Calu3 (cell line): ENCODE measurements at regions of chr7 and their contacts with region 1.

Region 1: GRCh38 chr7:142523821-142524460 is 225.3 kb upstream of the PRSS1 start:
- DNase-seq: no peak
- H3K4me3 Mint-ChIP-seq: no peak overlapping the region
- H3K27ac Mint-ChIP-seq: no peak overlapping the region
- H3K4me1 Mint-ChIP-seq: no peaks in the 10 kb centered on the region
- H3K27me3 Mint-ChIP-seq: peaks cover 66% of the 10 kb centered on the region
- CTCF ChIP-seq: no peak

Region 2: GRCh38 chr7:142503036-142503435 is 20.9 kb before region 1 on chr7:
- CTCF ChIA-PET with region 1: interaction called, 5 read pairs
- intact Hi-C with region 1: loop called (anchors 2 kb)
- DNase-seq: no peak
- H3K4me3 Mint-ChIP-seq: no peak overlapping the region
- H3K27ac Mint-ChIP-seq: no peak overlapping the region
- H3K4me1 Mint-ChIP-seq: peaks cover 12% of the 10 kb centered on the region
- H3K27me3 Mint-ChIP-seq: peaks cover 56% of the 10 kb centered on the region
- CTCF ChIP-seq: no peak

Region 3: DNA sequence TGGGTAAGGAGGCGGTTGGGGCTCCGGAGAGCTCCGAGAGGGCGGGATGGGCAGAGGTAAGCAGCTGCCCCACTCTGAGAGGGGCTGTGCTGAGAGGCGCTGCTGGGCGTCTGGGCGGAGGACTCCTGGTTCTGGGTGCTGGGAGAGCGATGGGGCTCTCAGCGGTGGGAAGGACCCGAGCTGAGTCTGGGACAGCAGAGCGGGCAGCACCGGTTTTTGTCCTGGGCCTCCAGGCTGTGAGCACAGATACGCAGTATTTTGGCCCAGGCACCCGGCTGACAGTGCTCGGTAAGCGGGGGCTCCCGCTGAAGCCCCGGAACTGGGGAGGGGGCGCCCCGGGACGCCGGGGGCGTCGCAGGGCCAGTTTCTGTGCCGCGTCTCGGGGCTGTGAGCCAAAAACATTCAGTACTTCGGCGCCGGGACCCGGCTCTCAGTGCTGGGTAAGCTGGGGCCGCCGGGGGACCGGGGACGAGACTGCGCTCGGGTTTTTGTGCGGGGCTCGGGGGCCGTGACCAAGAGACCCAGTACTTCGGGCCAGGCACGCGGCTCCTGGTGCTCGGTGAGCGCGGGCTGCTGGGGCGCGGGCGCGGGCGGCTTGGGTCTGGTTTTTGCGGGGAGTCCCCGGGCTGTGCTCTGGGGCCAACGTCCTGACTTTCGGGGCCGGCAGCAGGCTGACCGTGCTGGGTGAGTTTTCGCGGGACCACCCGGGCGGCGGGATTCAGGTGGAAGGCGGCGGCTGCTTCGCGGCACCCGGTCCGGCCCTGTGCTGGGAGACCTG is 272.9 kb after region 1 on chr7:
- CTCF ChIA-PET with region 1: no interaction called
- intact Hi-C with region 1: no loop called
- DNase-seq: no peak
- H3K4me3 Mint-ChIP-seq: peak overlapping the region; percentile 36
- H3K27ac Mint-ChIP-seq: no peak overlapping the region
- H3K4me1 Mint-ChIP-seq: peaks cover 22% of the 10 kb centered on the region
- H3K27me3 Mint-ChIP-seq: peaks cover 96% of the 10 kb centered on the region
- CTCF ChIP-seq: no peak